ENCODE measurements at regions of chr7 and their contacts with region 1.

Region 1: GRCh38 chr7:25098096-25099046 is 26.7 kb downstream of the CYCS start:
- DNase-seq: no peak
- H3K4me3 ChIP-seq: no peak overlapping the region
- CTCF ChIP-seq: peak; percentile 85

Region 2: DNA sequence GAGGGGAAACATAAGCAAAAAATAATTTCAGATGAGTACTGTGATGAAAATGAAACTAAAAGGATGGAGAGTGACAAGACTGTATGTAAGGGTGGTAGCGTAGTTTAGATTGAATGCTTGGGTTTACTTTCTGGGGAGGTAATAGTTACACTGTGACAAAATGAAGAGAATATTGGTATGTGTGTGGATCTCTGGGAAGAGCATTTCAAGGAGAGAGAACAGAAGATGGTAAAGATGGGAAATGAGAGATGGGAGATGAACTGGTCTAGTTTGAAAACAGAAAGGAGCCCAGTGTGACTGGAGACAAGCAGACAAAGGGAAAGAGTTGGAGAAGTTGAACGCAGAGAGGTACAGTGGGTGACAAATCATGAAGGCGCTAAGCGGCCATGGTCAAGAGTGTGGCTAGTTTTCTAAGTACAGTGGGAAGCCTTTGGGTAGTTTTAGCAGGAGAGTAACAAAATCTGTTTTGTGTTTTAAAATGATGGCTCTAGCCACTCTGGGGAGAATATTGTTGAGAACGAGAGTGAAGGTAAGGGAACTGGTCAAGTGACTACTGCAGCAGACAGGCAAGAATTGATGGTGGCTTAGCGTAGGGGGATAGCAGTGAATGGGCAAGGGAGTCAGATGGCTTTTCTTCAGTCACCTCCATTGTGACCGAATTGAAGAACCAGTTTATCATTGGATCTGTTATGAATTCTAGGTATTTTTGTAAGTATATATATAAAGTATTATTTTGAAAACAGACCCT is 502.5 kb before region 1 on chr7:
- CTCF ChIA-PET with region 1: no interaction called
- POLR2A ChIA-PET with region 1: no interaction called
- DNase-seq: no peak
- H3K4me3 ChIP-seq: no peak overlapping the region
- CTCF ChIP-seq: no peak

Region 3: GRCh38 chr7:24701261-24702235 is 396.8 kb before region 1 on chr7:
- CTCF ChIA-PET with region 1: interaction called, 14 read pairs
- POLR2A ChIA-PET with region 1: no interaction called
- DNase-seq: peak; percentile 86
- H3K4me3 ChIP-seq: no peak overlapping the region
- CTCF ChIP-seq: no peak

Region 4: DNA sequence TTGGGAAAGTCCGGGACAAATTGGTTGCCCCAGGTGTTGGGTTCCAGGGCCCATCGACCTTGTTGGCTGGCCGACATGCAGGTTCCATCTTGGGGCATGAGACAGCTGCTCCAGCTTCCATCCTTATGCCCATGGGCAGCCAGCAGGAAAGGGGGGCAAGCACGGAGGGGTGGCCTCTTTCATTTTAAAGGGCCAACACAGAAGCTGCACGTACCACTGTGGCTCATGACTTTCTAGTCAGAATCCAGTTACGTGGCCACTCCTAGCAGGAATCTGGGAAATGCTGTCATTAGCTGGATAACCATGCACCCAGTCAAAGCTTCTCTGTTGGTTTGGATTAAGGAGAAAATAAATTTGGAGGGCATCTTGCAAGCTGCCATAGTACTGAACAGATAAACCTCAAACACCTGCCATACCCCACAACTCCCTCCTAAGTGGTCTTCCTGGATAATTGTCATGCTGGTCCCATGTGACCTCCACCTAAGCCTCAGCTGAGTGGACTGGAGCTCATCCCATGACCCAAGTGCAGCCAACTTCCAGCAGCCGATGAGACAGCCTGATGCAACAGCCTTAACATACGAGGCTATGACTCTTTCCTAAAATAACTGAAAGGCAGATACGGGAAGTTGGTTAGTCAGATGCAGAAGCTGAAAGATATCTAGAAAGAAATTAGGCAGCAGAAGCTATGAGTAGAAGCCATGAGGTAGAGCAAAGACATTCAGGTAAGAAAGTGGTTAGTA is 319.7 kb before region 1 on chr7:
- CTCF ChIA-PET with region 1: interaction called, 24 read pairs
- POLR2A ChIA-PET with region 1: no interaction called
- DNase-seq: peak; percentile 77
- H3K4me3 ChIP-seq: no peak overlapping the region
- CTCF ChIP-seq: no peak

Region 5: DNA sequence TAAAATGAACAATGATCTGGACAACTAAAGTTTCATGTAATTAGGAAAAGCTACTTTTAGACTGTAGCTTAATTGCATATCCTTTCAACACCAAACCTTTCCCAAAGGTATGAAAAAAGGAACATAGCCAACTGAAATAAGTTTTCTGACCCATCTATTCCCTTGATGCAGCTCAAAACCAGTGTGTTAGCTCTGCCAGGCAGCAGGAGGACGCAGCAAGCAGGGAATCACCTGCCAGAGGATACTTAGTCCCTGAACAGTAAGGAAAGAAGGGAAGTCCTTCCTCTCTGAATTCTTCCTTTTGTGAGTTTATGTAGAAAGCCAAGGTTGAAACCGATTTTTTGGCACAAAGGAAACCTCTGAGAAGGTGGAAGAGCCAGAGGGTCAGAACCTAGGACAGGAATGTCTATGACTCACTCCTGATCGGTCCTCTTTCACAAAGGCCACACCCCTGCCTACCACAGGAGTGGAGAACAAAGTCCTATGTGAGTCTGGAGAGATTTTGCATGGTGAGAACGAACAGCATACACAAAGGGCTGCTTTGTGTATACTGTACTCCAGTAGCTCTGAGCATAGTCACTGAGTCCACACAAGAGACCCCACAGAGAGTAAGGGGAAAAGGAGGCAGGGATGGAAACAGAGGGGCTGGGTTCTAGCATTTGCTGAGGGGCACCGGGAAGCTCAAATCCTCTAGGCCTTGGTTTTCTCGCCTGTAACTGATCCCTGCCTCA is 272.3 kb before region 1 on chr7:
- CTCF ChIA-PET with region 1: interaction called, 928 read pairs
- POLR2A ChIA-PET with region 1: interaction called, 6 read pairs
- DNase-seq: no peak
- H3K4me3 ChIP-seq: no peak overlapping the region
- CTCF ChIP-seq: no peak

Region 6: DNA sequence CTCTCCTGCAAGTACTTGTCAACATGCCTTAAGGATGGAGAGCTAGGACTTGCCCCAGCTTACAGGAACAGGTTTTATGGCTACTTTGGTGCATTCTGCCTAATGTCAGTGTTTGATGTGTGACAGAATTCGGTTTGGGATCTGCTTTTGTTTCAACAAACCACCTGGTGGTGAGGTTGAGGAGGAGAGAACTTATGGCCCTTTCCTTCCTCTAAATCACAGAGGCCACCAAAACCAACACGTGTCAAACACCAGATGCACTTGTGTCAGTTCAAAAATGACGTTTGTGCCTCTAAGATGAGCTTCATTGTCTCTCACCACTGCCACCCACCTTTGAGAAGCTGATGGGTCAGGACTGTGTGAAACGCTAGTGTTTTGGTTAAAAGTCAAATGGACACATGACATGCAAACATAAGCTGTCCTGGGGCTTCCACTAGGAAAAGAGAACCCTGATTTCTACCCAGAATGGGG is 202.3 kb before region 1 on chr7:
- CTCF ChIA-PET with region 1: interaction called, 24 read pairs
- POLR2A ChIA-PET with region 1: no interaction called
- DNase-seq: no peak
- H3K4me3 ChIP-seq: no peak overlapping the region
- CTCF ChIP-seq: no peak

Region 7: DNA sequence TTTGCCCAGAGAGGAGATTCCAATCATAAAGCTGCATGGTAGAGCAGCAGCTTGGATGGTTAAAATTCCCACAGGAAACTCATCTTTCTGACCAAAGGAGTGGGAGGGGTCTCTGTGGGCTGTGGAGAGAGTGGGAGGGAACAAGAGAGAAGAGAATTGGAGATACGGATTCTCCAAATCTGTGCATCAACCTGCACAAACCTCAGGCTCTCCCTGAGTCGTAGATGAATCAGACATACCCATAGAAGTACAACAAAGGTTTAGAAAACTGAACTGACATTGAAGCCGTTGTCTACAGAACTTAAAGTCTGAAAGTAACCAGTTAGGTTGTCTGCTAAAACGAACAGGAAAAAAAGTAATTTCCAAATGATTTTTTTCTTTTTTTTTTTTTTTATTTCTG is 15.2 kb before region 1 on chr7:
- CTCF ChIA-PET with region 1: interaction called, 171 read pairs
- POLR2A ChIA-PET with region 1: no interaction called
- DNase-seq: no peak
- H3K4me3 ChIP-seq: no peak overlapping the region
- CTCF ChIP-seq: no peak

Region 8: DNA sequence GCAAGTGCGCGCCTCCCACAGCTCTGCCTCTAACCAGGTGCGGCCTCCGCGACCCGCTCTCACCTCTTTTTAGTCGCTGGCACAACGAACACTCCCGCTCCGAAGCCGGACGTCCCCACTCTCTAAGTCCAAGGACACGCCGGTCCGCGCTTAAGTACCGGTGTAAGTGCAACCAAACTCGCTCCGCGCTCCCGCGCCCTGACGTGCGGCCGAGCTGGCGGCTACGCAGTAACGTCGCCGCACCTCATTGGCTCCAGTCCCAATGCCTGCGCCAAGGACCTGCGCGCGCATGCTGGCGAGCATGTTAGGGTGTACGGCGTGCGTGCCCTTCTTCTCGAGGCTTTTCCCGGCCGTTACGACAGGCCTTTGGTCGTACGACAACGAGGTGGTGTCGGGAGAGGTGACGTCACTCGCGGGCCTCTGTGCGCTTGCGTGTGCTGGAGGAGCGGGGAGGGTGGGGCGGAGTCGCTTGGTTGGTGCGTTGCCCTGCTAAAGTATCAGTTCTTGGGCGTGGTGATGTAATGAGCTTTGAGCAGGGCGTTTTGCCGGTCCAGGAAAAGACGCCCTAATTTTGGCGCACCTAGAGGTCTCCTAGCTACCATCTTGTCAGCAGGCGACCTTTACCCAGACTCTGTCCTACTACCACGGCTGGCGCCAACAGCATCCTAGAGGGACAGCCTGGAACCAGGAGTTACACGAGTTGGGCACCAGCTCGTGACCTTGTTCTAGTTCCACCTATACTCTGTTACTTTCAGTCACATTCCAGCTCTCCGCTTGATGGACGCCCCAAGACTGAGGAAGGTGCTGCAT is 27.0 kb after region 1 on chr7 and contains the start of gene CYCS:
- CTCF ChIA-PET with region 1: interaction called, 17 read pairs
- POLR2A ChIA-PET with region 1: no interaction called
- DNase-seq: peak; percentile 98
- H3K4me3 ChIP-seq: peak within 1 kb of the TSS; percentile 95
- CTCF ChIP-seq: no peak